ENCODE measurements at regions of chr9 and their contacts with region 1.

Region 1: GRCh38 chr9:132125944-132126720 is 35.7 kb upstream of the NTNG2 start:
- DNase-seq: no peak
- H3K4me3 ChIP-seq: peak overlapping the region in 1 of 4 experiments; percentile 44; a peak in 1 of 8 replicates
- H3K27ac ChIP-seq: peak overlapping the region; percentile 21; the same call in 1 of the 2 replicates
- H3K4me1 ChIP-seq: peaks cover 20 to 28% (median 24%) of the 10 kb centered on the region in 4 experiments
- H3K27me3 ChIP-seq: no peaks in the 10 kb centered on the region; a peak in 1 of 7 replicates
- CTCF ChIP-seq: no peak
- EP300 ChIP-seq: no peak
- POLR2A ChIP-seq: no peak
- RAD21 ChIP-seq: no peak

Region 2: GRCh38 chr9:132087438-132088030 is 38.6 kb before region 1 on chr9:
- CTCF ChIA-PET with region 1: no interaction called
- POLR2A ChIA-PET with region 1: no interaction called
- DNase-seq: no peak
- H3K4me3 ChIP-seq: no peak overlapping the region
- H3K27ac ChIP-seq: no peak overlapping the region
- H3K4me1 ChIP-seq: peaks cover 0 to 3% (median 0%) of the 10 kb centered on the region in 4 experiments; a peak in 1 of 7 replicates
- H3K27me3 ChIP-seq: 0 out of 7 replicates have a peak, but pooled peaks cover 0 to 2% (median 0%) of the 10 kb centered on the region in 4 experiments
- CTCF ChIP-seq: no peak
- EP300 ChIP-seq: no peak
- POLR2A ChIP-seq: no peak
- RAD21 ChIP-seq: no peak

Region 3: DNA sequence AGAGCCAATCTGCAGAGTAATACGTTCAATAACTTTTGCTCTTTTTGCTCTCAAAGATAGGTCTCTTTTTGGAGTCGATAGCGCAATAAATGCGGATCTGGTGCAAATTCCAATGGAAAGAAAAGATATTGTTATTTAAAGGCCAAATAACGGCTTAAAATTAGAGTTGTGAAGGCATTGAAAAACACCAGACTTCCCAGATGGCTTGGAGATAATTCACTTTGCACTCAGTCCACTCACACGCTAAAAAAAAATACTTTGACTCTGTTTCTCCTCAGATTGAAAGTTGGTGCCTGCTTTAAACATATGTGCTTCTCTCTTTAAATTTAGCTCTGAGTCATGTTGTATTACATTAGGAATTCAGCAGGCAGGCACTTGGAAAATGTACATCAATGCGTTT is 27.0 kb before region 1 on chr9:
- CTCF ChIA-PET with region 1: no interaction called
- POLR2A ChIA-PET with region 1: no interaction called
- DNase-seq: no peak
- H3K4me3 ChIP-seq: no peak overlapping the region
- H3K27ac ChIP-seq: no peak overlapping the region
- H3K4me1 ChIP-seq: no peaks in the 10 kb centered on the region
- H3K27me3 ChIP-seq: no peaks in the 10 kb centered on the region; a peak in 1 of 7 replicates
- CTCF ChIP-seq: no peak
- EP300 ChIP-seq: no peak
- POLR2A ChIP-seq: no peak
- RAD21 ChIP-seq: no peak

Region 4: GRCh38 chr9:132114102-132114707 is 11.9 kb before region 1 on chr9:
- CTCF ChIA-PET with region 1: no interaction called
- POLR2A ChIA-PET with region 1: no interaction called
- DNase-seq: peak in 1 of 2 experiments; percentile 93
- H3K4me3 ChIP-seq: no peak overlapping the region
- H3K27ac ChIP-seq: no peak overlapping the region
- H3K4me1 ChIP-seq: peaks cover 0 to under 1% (median 0%) of the 10 kb centered on the region in 4 experiments; a peak in 1 of 7 replicates
- H3K27me3 ChIP-seq: no peaks in the 10 kb centered on the region
- CTCF ChIP-seq: no peak
- EP300 ChIP-seq: no peak
- POLR2A ChIP-seq: no peak
- RAD21 ChIP-seq: peak in 1 of 2 experiments; percentile 33; a peak in 2 of 4 replicates

Region 5: GRCh38 chr9:132141344-132141947 is 15.3 kb after region 1 on chr9:
- CTCF ChIA-PET with region 1: interaction called, 8 read pairs
- POLR2A ChIA-PET with region 1: interaction called, 10 read pairs
- DNase-seq: peak in 1 of 2 experiments; percentile 57
- H3K4me3 ChIP-seq: peak overlapping the region; percentile 39 to 60 (median 50)
- H3K27ac ChIP-seq: no peak overlapping the region
- H3K4me1 ChIP-seq: peaks cover 2 to 17% (median 7%) of the 10 kb centered on the region in 4 experiments; a peak in 6 of 7 replicates
- H3K27me3 ChIP-seq: peaks cover 0 to 4% (median 0%) of the 10 kb centered on the region in 4 experiments; a peak in 2 of 7 replicates
- CTCF ChIP-seq: no peak
- EP300 ChIP-seq: no peak
- POLR2A ChIP-seq: no peak
- RAD21 ChIP-seq: no peak

Measured in H1 (cell line).